Activated CD4-positive, alpha-beta T cell treated with anti-CD3 and anti-CD28 coated beads, Interleukin-2, amount 10 ng/mL, durations not matched to agents 7 days and 5 days (primary cell): ENCODE measurements at regions of chr16 and their contacts with region 1.

Region 1: DNA sequence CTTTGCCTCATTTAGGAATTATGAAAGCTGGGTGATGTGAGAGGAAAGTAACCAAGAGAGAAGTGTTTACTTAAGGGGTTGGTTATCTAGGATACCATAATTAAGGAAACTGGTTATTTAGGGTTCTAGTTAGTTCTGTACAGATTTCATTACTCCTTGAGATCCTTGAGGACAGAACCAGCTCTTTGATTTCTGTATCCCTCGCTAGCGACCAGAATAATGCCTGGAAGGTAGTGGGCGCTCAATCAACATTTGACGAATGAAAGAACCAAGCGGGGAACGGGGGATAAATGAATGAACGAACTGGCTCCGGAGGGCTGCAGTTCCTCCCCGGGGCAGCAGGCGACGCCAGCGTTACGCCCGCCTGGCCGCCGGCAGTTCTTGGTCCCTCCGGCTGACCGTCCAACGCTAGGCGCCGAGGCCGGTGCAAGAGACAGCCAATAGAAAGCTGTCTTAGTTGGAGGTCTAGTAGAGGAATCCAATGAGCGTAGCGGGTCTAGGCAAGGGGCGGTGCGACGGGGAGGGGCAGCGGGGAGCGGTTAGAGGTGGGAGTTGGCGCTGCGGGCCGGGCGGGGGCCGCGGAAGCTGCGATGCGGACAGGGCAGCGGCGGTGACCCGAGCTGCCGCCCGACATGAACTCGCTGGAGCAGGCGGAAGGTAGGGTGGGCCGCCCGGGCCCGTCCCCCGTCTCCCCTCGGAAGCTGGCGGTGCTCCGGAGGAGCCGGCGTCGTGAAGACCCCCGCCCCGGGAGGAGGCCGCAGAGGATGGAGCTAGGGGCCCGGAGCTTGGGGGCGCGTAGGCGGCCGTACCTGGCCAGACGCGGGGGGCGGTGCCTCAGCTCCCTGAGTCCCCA is at the start of gene CNEP1R1:
- DNase-seq: peak; percentile 93
- H3K4me3 Mint-ChIP-seq: peak within 1 kb of the TSS; percentile 94
- H3K27ac Mint-ChIP-seq: peak within 1 kb of the TSS; percentile 95
- H3K4me1 Mint-ChIP-seq: peaks cover 23% of the 10 kb centered on the region
- H3K27me3 Mint-ChIP-seq: no peaks in the 10 kb centered on the region
- total RNA-seq, gene CNEP1R1: 22.7 to 29.1 TPM

Region 2: DNA sequence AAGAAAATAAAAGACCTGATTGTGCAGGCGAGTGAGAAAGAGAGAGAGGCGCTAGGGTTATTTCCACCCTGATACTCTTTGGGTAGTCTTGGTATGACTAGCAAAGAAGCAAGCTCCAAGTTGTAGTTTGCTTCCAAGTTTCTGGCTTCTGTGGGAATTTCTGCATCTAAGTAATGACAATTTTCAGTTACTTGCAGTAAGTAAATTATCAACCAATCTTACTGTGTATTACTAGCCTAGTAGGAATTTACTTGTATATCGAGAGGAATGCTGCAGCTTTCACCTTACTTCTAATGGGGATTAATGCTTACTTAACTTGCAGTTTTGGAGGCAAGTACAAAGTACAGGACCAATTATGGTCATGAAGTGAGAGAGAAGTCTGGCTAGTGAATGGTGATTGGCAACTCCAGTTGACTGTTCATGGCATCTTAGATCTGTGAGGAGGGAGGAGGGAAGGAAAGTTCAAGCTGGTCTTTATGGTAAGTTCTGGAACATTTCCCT is 160.1 kb after region 1 on chr16:
- CTCF ChIA-PET with region 1: no interaction called
- POLR2A ChIA-PET with region 1: no interaction called
- DNase-seq: no peak
- H3K4me3 Mint-ChIP-seq: no peak overlapping the region
- H3K27ac Mint-ChIP-seq: no peak overlapping the region
- H3K4me1 Mint-ChIP-seq: peaks cover 24% of the 10 kb centered on the region
- H3K27me3 Mint-ChIP-seq: no peaks in the 10 kb centered on the region

Region 3: GRCh38 chr16:50195276-50195675 is 170.4 kb after region 1 on chr16:
- CTCF ChIA-PET with region 1: interaction called, 11 read pairs
- POLR2A ChIA-PET with region 1: no interaction called
- DNase-seq: no peak
- H3K4me3 Mint-ChIP-seq: no peak overlapping the region
- H3K27ac Mint-ChIP-seq: peak overlapping the region; percentile 54
- H3K4me1 Mint-ChIP-seq: peaks cover 59% of the 10 kb centered on the region
- H3K27me3 Mint-ChIP-seq: no peaks in the 10 kb centered on the region

Region 4: DNA sequence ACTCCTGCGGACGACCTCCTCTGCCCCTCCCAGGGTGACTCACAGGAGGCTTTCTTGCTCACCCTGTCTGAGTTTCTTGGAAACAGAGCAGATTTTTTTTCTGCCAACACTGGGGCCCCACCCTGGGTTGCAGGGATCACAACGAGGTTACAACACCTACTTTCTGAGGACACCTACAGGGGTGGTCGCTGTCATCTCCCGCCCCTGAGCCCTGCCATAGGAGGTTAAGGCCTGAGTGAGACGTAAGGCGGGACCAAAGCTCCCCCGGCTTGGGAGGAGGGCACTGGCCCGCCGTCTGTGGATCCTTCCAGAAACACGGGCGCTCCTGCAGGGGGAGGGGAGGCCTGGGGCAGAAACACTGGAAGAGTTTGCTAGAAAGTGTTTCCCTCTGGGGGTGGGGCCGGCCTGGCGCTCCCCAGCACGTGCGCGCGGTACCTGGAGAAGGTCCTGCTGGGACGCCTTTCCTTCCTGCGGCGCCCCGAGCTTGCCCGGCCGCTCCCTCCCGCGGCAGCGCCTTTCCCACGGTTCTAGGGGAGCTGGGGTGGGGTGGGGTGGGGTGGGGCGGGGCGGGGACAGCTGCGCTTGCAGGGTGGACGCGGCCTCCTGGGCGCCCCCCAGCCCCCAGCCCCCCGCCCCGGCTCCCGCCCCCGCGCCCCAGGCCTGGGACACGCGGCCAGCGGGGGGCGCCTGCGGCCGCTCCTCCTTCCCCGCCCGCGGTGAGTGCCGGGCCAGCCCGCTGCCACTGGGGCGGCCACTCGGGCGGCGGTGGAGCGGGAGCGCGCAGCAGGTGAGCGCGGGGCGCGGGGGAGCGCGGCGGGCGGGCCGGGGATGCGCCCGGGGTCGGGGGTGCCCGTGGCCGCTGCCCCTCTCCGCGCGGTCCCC is 220.7 kb after region 1 on chr16:
- CTCF ChIA-PET with region 1: interaction called, 12 read pairs
- POLR2A ChIA-PET with region 1: no interaction called
- DNase-seq: peak; percentile 60
- H3K4me3 Mint-ChIP-seq: peak overlapping the region; percentile 78
- H3K27ac Mint-ChIP-seq: peak overlapping the region; percentile 85
- H3K4me1 Mint-ChIP-seq: peaks cover 29% of the 10 kb centered on the region
- H3K27me3 Mint-ChIP-seq: peaks cover 7% of the 10 kb centered on the region

Region 5: DNA sequence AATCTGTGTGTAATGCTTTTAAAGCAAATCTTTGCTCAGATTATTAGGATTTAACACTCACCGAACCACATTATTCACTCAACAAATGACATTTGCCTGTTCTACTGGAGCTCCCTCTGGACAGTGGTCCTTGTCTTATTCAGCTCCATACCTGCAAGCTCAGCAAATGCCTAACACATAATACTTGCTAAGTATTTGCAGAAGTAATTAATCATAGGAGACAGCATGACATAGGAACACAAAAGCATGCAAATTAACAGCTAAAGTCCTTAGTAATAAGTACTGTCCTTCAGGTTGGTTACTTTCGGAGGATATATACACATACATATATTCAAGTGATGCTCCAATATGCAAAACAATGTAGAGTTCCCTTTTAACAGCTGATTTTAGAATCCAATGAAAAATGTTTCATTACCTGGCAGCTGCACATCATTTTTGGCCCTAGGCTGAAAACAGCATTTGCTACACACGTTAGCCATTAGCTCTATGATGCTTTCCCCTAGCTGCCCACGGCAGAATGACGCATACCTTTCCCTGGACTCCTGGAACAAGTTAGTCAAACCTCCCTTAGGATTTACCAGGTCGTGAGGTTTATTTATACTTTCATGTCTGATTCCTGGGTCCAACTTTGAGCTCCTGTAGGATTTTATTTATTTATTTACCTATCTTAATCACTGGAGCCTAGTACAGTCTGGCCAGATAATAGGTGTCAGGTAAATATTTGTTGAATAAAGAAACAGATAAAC is 335.3 kb after region 1 on chr16:
- CTCF ChIA-PET with region 1: interaction called, 10 read pairs
- POLR2A ChIA-PET with region 1: no interaction called
- DNase-seq: no peak
- H3K4me3 Mint-ChIP-seq: no peak overlapping the region
- H3K27ac Mint-ChIP-seq: no peak overlapping the region
- H3K4me1 Mint-ChIP-seq: peaks cover 45% of the 10 kb centered on the region
- H3K27me3 Mint-ChIP-seq: no peaks in the 10 kb centered on the region